B cell (primary cell): ENCODE measurements at regions of chr2 and their contacts with region 1.

Region 1: GRCh38 chr2:181517685-181518301 is 60.6 kb downstream of the ITGA4 start:
- DNase-seq: no peak
- ATAC-seq: no peak
- H3K4me3 ChIP-seq: no peak overlapping the region
- H3K4me3 Mint-ChIP-seq: no peak overlapping the region
- H3K27ac ChIP-seq: peak overlapping the region in 1 of 2 donors; percentile 53
- H3K27ac Mint-ChIP-seq: peak overlapping the region; percentile 57
- H3K4me1 ChIP-seq: peaks cover 0 to 2% of the 10 kb centered on the region in 2 donors
- H3K4me1 Mint-ChIP-seq: peaks cover 7% of the 10 kb centered on the region
- H3K27me3 ChIP-seq: no peaks in the 10 kb centered on the region
- H3K27me3 Mint-ChIP-seq: no peaks in the 10 kb centered on the region
- CTCF ChIP-seq: no peak

Region 2: DNA sequence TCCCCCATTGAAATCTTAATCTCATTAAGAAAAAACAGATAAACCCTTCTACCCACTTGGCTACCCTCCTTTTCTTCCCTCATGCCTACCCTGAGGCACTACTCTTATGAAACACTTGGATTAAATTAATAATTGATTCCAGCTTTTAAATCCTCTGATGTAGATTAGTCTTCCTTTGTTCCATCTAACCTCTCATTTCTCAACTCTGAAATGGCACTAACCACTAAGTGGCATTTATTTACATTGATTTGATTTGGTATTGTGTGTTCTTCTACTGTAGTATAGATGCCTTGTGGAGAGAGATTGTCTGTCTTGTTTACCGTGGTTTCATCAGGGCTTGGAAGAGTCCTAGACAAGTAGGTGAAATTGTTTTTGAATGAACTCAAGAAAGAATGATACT is 33.9 kb before region 1 on chr2:
- CTCF ChIA-PET with region 1: no interaction called
- POLR2A ChIA-PET with region 1: no interaction called
- intact Hi-C with region 1: loop called (anchors 5 kb)
- DNase-seq: no peak
- ATAC-seq: no peak
- H3K4me3 ChIP-seq: no peak overlapping the region
- H3K4me3 Mint-ChIP-seq: no peak overlapping the region
- H3K27ac ChIP-seq: no peak overlapping the region
- H3K27ac Mint-ChIP-seq: peak overlapping the region; percentile 10
- H3K4me1 ChIP-seq: no peaks in the 10 kb centered on the region
- H3K4me1 Mint-ChIP-seq: peaks cover 2% of the 10 kb centered on the region
- H3K27me3 ChIP-seq: no peaks in the 10 kb centered on the region
- H3K27me3 Mint-ChIP-seq: no peaks in the 10 kb centered on the region
- CTCF ChIP-seq: no peak